WTC11 (cell line): ENCODE measurements at regions of chr10 and their contacts with region 1.

Region 1: GRCh38 chr10:113788604-113789083 is 37.2 kb downstream of the PLEKHS1 start:
- DNase-seq: no peak
- ATAC-seq: no peak
- H3K4me3 Mint-ChIP-seq: no peak overlapping the region
- H3K27ac Mint-ChIP-seq: no peak overlapping the region
- H3K4me1 Mint-ChIP-seq: no peaks in the 10 kb centered on the region
- H3K27me3 Mint-ChIP-seq: no peaks in the 10 kb centered on the region
- CTCF ChIP-seq: no peak

Region 2: GRCh38 chr10:113476191-113476590 is 312.5 kb before region 1 on chr10:
- CTCF ChIA-PET with region 1: no interaction called
- POLR2A ChIA-PET with region 1: no interaction called
- DNase-seq: no peak
- ATAC-seq: peak; percentile 41; the same call in 1 of the 2 replicates
- H3K4me3 Mint-ChIP-seq: no peak overlapping the region
- H3K27ac Mint-ChIP-seq: no peak overlapping the region
- H3K4me1 Mint-ChIP-seq: peaks cover 7% of the 10 kb centered on the region; the same call in 1 of the 2 replicates
- H3K27me3 Mint-ChIP-seq: peaks cover 3% of the 10 kb centered on the region; the same call in 1 of the 2 replicates
- CTCF ChIP-seq: no peak

Region 3: DNA sequence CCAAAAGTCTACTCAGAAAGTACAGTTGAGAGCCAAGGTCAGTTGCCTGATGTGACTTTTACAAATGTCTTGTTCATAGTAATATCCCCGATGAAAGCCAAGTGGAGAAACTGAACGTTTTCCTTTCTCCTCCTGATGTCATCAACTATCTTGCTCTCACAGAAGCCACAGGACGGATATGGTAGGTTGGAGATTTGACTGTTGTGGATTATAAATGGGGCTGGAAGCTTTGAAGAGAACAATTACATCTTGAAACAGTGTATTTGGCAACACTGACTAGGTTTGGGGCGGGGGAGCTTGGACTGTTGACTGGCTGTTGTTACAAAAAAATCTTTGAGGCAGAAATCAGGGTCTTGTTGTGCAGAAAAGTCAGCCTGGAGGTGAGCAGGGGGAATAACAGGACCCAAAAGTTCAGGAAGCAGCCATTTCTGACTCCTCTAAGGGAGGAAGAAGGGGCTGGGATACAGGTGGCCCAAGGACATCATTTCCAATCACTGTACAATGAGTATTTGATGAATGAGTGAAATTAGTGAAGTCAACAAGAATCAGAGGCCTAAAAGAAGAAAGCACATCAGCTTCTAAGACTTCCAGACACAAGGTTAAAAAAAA is 12.9 kb before region 1 on chr10:
- CTCF ChIA-PET with region 1: no interaction called
- POLR2A ChIA-PET with region 1: no interaction called
- DNase-seq: no peak
- ATAC-seq: peak; percentile 47; the same call in 1 of the 2 replicates
- H3K4me3 Mint-ChIP-seq: no peak overlapping the region
- H3K27ac Mint-ChIP-seq: no peak overlapping the region
- H3K4me1 Mint-ChIP-seq: peaks cover 7% of the 10 kb centered on the region; the same call in 1 of the 2 replicates
- H3K27me3 Mint-ChIP-seq: no peaks in the 10 kb centered on the region; the same call in 1 of the 2 replicates
- CTCF ChIP-seq: no peak

Region 4: GRCh38 chr10:113802997-113803396 is 14.4 kb after region 1 on chr10:
- CTCF ChIA-PET with region 1: interaction called, 10 read pairs
- POLR2A ChIA-PET with region 1: no interaction called
- DNase-seq: no peak
- ATAC-seq: no peak
- H3K4me3 Mint-ChIP-seq: no peak overlapping the region
- H3K27ac Mint-ChIP-seq: no peak overlapping the region
- H3K4me1 Mint-ChIP-seq: no peaks in the 10 kb centered on the region
- H3K27me3 Mint-ChIP-seq: no peaks in the 10 kb centered on the region
- CTCF ChIP-seq: no peak

Region 5: DNA sequence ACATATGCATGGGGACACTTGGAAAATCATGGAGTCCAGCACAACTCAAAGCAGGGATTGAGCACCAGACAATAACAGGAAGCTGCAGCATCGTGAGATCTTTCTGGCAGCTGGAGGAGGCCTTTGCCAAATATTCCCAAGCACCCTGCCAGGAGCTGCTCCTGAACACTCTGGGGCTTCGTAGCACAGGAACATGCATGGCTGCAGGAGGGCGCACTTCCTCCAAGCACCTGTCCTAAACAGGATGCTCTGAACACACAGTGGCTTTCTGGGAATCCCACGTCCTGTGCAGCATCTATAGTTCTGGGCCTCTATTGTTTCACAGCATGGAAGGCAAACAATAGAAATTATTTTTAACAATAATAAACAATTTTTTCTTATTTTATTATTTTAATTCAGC is 865.3 kb after region 1 on chr10:
- CTCF ChIA-PET with region 1: no interaction called
- POLR2A ChIA-PET with region 1: no interaction called
- DNase-seq: no peak
- ATAC-seq: peak; percentile 55
- H3K4me3 Mint-ChIP-seq: no peak overlapping the region
- H3K27ac Mint-ChIP-seq: no peak overlapping the region
- H3K4me1 Mint-ChIP-seq: no peaks in the 10 kb centered on the region
- H3K27me3 Mint-ChIP-seq: no peaks in the 10 kb centered on the region
- CTCF ChIP-seq: no peak